Mucosa of descending colon (tissue), 3 donors: ENCODE measurements at regions of chr6 and their contacts with region 1.

Region 1: DNA sequence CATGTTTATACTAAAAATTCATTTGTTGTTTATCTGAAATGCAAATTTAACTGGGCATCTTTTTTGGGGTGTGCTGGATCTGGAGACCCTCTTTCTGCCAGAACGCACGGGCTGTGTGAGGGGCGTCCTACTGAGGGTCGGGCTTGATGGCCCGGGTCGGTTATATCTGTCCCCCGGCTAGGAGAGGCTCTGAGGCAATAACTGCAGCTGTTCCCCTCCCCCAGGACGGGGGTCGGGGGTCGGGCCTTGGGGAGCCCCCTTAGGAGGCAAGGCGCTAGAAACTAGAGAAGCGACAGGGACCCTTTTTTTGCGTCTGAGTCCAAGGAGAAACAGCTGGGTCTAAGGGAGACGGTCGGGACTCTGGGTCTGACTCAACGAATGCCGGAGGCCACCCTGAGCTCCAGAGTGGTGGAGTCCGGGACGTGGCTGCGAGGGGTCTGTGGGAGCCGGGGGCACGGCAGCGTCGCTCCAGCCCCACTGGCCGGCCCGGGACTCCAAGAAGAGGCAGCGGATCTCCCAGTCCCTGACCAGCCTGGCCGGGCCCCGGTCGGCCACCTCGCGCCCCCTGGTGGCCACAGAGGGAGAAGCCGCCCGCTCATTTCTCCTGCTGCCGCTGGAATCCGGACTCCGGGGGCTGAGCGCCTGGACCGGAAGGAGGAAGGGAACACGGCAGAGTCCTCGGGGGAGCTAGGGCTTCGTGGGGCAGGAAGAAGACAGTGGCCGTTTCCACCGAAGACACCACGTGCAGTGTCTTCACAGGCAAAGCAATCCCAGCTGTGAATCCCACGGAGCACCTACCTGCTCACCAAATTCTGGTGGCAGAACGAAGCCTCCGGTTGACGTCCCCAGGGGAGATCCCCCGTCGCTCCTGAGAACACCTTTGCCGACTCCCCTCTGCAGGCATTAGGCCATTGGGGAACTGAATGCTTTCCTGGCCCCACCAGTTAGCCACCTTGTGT is 24.0 kb upstream of the SCML4 start:
- DNase-seq: peak; percentile 87 to 92 (median 90)
- ATAC-seq: peak; percentile 99
- H3K4me3 ChIP-seq: no peak overlapping the region
- H3K4me1 ChIP-seq: peaks cover 5% of the 10 kb centered on the region
- CTCF ChIP-seq: peak; percentile 93

Region 2: DNA sequence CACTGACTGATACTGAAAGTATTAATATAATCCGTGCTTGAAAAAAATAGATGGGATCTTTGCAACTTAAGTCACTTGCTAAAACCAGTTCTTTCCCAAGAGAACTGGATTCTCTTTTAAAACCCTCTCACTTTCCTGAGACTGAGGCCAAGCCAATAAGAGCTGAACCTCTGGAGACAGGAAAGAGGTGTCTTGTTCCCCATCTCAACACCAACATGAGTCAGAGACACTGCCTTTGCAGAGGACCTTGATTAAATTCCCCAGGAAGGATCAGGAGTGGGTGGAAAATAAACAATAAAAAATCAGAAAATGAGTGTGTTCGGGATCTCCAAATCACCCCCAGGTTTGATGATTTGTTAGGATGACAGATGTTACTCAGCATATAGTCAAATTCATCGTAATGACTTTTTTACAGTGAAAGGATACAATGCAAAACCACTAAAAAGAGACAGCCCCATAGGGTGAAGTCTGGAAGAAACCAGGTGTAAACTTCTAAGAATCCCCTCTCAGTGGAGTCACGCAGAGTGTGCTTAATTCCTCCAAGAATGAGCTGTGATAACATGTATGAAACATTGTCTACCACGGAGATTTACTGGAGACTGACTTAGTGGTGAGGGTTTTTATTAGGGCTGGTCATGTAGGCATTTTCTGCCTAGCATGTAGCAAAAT is 610.0 kb before region 1 on chr6:
- intact Hi-C with region 1: no loop called
- DNase-seq: no peak
- ATAC-seq: no peak
- H3K4me3 ChIP-seq: no peak overlapping the region
- H3K4me1 ChIP-seq: no peaks in the 10 kb centered on the region
- CTCF ChIP-seq: no peak

Region 3: DNA sequence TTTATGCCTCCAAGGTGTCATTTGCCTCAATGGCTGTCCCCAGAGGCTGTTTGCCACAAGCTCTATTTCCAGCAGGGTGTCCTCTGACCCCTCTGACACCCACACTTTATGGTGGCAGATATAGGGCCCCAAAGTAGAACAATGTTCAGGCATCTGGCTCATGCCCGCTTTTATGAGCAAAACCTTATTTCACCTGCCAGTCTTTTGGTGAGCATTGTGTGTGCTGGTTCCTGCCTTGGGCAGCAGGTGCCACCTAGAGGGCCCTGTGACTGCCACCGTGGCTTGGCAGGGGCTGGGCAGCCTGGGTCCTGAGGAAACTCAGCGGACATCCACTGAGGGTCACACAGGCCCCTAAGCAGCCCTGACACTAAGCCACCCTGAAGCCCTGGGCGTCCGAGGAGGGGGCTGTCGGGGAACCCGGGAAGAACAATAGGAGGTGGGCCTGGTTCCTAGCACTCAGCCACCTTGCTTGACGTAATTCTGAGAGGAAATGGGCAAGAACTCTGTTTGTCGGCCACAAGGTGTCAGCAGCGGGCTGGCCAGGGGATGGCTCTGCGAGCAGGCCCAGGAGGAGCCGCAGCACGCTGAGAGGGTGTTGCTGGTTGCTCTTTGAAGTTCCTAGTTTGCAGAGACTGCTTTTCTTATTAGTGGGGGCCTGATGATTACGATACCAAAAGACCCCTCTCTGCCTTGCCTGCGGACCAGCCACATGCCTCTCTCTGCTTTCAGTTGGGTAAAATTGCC is 173.0 kb before region 1 on chr6:
- intact Hi-C with region 1: loop called (anchors 5 kb)
- DNase-seq: peak; percentile 75 to 91 (median 90)
- ATAC-seq: peak; percentile 98
- H3K4me3 ChIP-seq: no peak overlapping the region
- H3K4me1 ChIP-seq: no peaks in the 10 kb centered on the region
- CTCF ChIP-seq: peak; percentile 76

Region 4: GRCh38 chr6:108001696-108002231 is 153.6 kb after region 1 on chr6:
- intact Hi-C with region 1: no loop called
- DNase-seq: peak in 1 of 3 donors; percentile 35
- ATAC-seq: peak; percentile 59
- H3K4me3 ChIP-seq: no peak overlapping the region
- H3K4me1 ChIP-seq: peaks cover 23% of the 10 kb centered on the region
- CTCF ChIP-seq: no peak